Activated naive CD4-positive, alpha-beta T cell treated with anti-CD3 and anti-CD28 coated beads, Interleukin-2, amount 10 ng/mL, durations not matched to agents 7 days and 5 days (primary cell): ENCODE measurements at regions of chr4 and their contacts with region 1.

Region 1: GRCh38 chr4:48109413-48110263 is 24.4 kb downstream of the TXK start:
- DNase-seq: no peak
- H3K4me3 Mint-ChIP-seq: no peak overlapping the region
- H3K27ac Mint-ChIP-seq: no peak overlapping the region
- H3K4me1 Mint-ChIP-seq: peaks cover 33% of the 10 kb centered on the region
- H3K27me3 Mint-ChIP-seq: no peaks in the 10 kb centered on the region

Region 2: GRCh38 chr4:46931981-46932380 is 1177.7 kb before region 1 on chr4:
- CTCF ChIA-PET with region 1: no interaction called
- DNase-seq: peak; percentile 37
- H3K4me3 Mint-ChIP-seq: no peak overlapping the region
- H3K27ac Mint-ChIP-seq: no peak overlapping the region
- H3K4me1 Mint-ChIP-seq: no peaks in the 10 kb centered on the region
- H3K27me3 Mint-ChIP-seq: no peaks in the 10 kb centered on the region

Region 3: GRCh38 chr4:48033825-48034413 is 75.7 kb before region 1 on chr4:
- CTCF ChIA-PET with region 1: interaction called, 17 read pairs
- DNase-seq: peak; percentile 75
- H3K4me3 Mint-ChIP-seq: no peak overlapping the region
- H3K27ac Mint-ChIP-seq: no peak overlapping the region
- H3K4me1 Mint-ChIP-seq: peaks cover 13% of the 10 kb centered on the region
- H3K27me3 Mint-ChIP-seq: no peaks in the 10 kb centered on the region

Region 4: DNA sequence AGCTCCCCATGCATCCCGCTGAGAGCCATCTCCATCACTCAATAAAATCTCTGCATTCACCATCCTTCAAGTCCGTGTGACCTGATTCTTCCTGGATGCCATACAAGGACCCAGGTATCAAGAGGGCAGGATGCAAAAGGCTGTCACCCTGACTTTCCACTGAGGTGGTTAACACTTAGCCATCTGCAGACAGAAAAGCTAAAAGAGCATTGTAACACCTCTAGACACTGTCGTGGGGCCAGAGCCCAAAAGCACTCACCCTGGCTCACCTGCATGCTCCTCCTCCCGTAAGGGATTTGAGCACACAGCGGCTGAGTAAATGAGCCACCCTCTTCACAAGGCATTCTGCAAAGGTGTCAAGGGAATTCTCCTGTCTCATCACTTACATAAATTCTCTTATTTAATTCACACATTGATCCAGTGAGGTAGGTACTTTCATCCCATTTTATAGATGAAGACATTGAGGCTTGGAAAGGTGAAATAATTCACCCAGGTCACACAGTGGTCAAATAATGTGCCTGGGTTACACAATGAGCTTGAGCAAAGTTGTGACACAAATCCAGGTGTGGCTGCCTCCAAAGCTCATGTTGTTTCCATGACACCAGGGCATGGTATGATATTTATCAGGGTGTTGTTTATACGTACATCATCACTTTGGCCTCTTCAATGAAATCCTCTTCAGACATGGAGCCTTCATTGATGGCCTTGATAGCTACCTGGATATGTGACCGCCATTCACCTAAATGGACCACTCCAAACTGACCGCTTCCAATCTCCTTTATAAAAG is 23.6 kb before region 1 on chr4:
- CTCF ChIA-PET with region 1: interaction called, 12 read pairs
- DNase-seq: no peak
- H3K4me3 Mint-ChIP-seq: no peak overlapping the region
- H3K27ac Mint-ChIP-seq: no peak overlapping the region
- H3K4me1 Mint-ChIP-seq: no peaks in the 10 kb centered on the region
- H3K27me3 Mint-ChIP-seq: no peaks in the 10 kb centered on the region

Region 5: GRCh38 chr4:48093949-48094550 is 15.6 kb before region 1 on chr4:
- CTCF ChIA-PET with region 1: interaction called, 16 read pairs
- DNase-seq: no peak
- H3K4me3 Mint-ChIP-seq: no peak overlapping the region
- H3K27ac Mint-ChIP-seq: no peak overlapping the region
- H3K4me1 Mint-ChIP-seq: no peaks in the 10 kb centered on the region
- H3K27me3 Mint-ChIP-seq: no peaks in the 10 kb centered on the region

Region 6: DNA sequence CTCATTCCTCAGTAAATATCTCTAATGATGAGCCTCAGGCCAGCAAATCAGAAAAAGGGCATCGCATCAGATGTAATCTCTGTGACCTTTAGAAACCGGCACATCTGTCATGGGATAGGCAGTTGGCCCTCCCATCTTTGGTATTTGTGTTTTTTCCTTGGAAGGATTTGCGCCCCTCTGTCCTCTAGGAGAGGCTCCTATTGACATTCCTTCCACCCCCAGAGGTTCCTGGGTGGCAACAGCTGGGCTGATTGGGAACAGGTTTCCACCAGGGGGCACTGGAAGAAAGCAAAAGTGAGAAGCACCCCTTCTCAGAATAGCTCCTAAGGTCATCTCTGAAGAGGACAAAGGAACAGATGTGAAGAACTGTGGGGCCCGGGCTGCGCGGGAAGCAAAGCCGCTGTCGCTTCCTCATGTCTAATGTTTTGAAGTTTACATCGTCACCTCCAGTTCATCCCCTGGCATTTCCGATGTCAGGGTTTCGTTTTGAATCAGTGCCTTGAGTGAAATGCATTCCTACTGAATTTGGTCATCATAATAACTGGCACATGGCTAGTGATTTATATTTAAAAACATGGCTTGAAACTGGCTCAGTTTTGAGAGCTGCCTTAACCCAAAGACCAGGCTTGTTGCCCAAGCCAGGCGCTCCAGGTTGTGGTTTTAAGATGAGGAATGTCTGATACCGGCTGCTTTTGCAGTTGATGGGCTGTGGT is 18.2 kb after region 1 on chr4:
- CTCF ChIA-PET with region 1: interaction called, 10 read pairs
- DNase-seq: peak; percentile 90
- H3K4me3 Mint-ChIP-seq: peak overlapping the region; percentile 94
- H3K27ac Mint-ChIP-seq: peak overlapping the region; percentile 99
- H3K4me1 Mint-ChIP-seq: peaks cover 85% of the 10 kb centered on the region
- H3K27me3 Mint-ChIP-seq: no peaks in the 10 kb centered on the region

Region 7: DNA sequence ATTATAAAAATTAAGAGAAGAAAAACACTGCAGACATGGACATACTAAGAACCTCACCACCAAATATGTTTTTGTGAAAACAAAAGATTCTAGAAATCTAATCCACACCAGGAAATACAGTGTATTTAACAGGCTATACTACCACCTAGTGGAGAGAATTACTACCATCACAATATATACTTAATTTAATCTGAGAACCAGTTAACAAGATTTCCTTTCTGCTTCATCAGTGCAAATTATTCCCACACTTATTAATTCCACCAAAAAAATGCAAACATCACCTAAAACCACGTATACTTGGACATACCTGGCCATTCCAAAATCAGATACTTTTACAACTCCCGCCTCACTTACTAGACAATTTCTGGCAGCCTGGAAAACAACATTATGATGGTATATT is 31.4 kb after region 1 on chr4:
- CTCF ChIA-PET with region 1: interaction called, 14 read pairs
- DNase-seq: no peak
- H3K4me3 Mint-ChIP-seq: no peak overlapping the region
- H3K27ac Mint-ChIP-seq: no peak overlapping the region
- H3K4me1 Mint-ChIP-seq: peaks cover 52% of the 10 kb centered on the region
- H3K27me3 Mint-ChIP-seq: no peaks in the 10 kb centered on the region